Activated CD4-positive, alpha-beta T cell treated with anti-CD3 and anti-CD28 coated beads, Interleukin-2, amount 10 ng/mL, durations not matched to agents 24 days and 14 days (primary cell): ENCODE measurements at regions of chr18 and their contacts with region 1.

Region 1: DNA sequence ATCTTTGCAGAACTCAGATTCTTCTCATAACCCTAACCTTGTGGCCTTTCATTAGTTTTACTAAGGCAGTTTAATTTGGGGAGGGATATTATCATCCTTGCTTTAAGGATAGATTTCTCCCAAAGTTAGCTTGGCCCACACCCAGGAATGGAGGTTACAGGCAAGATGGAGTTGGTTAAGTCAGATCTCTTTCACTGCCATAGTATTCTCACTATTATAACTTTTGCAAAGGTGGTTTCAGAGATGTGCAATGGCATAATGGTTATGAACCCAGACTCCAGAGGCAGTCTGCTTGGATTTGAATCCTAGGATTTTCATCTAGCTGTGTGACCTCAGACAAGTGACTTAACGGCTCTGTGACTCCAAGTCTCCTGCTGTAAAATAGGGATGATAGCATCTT is 48.7 kb upstream of the NDUFV2 start:
- DNase-seq: no peak
- H3K4me3 Mint-ChIP-seq: no peak overlapping the region
- H3K27ac Mint-ChIP-seq: no peak overlapping the region
- H3K4me1 Mint-ChIP-seq: peaks cover 9% of the 10 kb centered on the region
- H3K27me3 Mint-ChIP-seq: peaks cover 1% of the 10 kb centered on the region

Region 2: GRCh38 chr18:9017170-9017904 is 36.5 kb before region 1 on chr18:
- intact Hi-C with region 1: loop called (anchors 5 kb)
- DNase-seq: peak; percentile 88
- H3K4me3 Mint-ChIP-seq: peak overlapping the region; percentile 78
- H3K27ac Mint-ChIP-seq: peak overlapping the region; percentile 86
- H3K4me1 Mint-ChIP-seq: peaks cover 11% of the 10 kb centered on the region
- H3K27me3 Mint-ChIP-seq: no peaks in the 10 kb centered on the region

Region 3: GRCh38 chr18:9321017-9321452 is 267.2 kb after region 1 on chr18:
- intact Hi-C with region 1: no loop called
- DNase-seq: no peak
- H3K4me3 Mint-ChIP-seq: no peak overlapping the region
- H3K27ac Mint-ChIP-seq: no peak overlapping the region
- H3K4me1 Mint-ChIP-seq: no peaks in the 10 kb centered on the region
- H3K27me3 Mint-ChIP-seq: peaks cover 21% of the 10 kb centered on the region